Activated CD4-positive, alpha-beta memory T cell treated with anti-CD3 and anti-CD28 coated beads for 36 hours (primary cell): ENCODE measurements at regions of chr12 and their contacts with region 1.

Region 1: DNA sequence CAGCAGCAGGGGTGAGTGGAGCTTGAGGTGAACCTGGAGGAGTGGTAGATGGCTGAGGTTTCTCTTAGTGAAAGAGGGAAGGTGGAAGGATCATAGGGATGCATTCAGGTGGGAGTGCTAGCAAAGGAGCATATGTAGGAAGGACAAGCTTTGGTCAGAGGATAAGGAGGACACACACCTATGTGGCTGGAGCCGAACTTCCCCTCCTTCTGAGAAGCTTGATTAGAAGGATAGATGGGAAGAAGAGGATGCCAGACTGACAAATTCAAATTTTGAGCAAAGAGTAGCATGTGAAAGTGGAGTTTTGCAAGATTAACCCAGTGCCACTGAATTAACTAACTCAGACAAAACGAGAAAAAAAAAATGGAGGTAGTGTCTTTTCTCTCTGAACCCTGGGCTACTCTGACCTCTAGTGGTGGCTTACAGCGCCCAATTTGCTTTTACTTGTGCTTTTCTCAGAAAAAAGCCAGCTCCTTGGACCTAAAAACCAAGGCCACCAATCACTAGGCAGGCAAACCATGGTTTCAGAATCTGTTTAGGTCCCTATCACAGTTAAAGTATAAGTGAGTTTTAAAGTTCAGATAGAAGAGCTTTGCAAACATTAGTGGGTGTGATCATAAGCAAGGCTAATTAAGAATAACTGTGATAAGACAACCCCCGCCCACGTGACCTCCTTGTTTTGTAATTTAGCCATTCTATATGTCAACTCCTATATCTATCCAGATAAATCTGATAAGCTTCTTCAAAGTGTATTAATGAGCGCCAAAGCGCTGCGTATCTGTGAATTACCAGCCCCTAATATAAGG is 15.5 kb downstream of the EMP1 start:
- DNase-seq: peak; percentile 81
- H3K4me3 Mint-ChIP-seq: peak overlapping the region; percentile 53
- H3K27ac Mint-ChIP-seq: peak overlapping the region; percentile 93
- H3K4me1 Mint-ChIP-seq: peaks cover 54% of the 10 kb centered on the region
- H3K27me3 Mint-ChIP-seq: no peaks in the 10 kb centered on the region

Region 2: DNA sequence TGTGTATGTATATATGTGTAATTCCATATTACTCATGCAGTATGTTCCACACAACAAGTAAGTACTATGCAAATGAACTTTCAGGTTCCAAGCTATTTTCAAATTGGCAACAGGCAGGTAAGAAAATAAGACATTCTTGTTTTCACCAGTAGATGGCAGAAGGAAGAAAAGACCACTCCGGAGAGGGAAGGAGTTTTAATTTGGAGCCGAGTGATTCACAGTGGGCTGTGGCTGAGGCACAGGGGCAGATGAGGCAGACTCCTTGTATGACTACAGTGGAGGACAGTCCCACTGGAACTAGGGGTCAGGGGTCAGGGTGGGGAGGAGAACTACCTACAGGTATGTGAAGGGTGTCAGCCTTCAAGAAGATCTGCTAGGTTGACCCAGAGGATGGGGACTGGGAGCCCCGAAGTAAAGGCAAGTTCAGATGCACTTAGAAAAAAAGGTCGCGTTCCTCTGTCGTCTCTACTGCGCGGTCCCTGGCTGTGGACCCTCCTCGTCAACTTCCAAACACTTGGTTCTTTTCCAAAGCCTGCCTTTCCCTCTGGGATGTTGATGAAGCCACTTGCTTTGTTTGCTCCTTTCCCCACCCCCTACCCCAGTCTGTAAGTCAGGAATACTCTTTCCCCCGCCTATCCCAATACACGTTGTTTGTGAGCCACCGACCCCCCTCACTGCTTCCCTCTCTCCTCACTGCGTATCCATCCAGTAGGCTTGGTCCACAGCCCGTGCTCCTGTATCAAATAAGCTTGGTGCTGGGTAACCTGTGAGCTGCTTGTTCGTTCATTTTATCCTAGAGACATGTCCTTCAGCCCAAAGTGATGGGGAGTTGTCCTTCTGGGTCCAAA is 374.8 kb before region 1 on chr12:
- CTCF ChIA-PET with region 1: interaction called, 9 read pairs
- POLR2A ChIA-PET with region 1: no interaction called
- intact Hi-C with region 1: loop called (anchors 5 kb)
- DNase-seq: peak; percentile 79
- H3K4me3 Mint-ChIP-seq: no peak overlapping the region
- H3K27ac Mint-ChIP-seq: peak overlapping the region; percentile 42
- H3K4me1 Mint-ChIP-seq: peaks cover 48% of the 10 kb centered on the region
- H3K27me3 Mint-ChIP-seq: no peaks in the 10 kb centered on the region

Region 3: DNA sequence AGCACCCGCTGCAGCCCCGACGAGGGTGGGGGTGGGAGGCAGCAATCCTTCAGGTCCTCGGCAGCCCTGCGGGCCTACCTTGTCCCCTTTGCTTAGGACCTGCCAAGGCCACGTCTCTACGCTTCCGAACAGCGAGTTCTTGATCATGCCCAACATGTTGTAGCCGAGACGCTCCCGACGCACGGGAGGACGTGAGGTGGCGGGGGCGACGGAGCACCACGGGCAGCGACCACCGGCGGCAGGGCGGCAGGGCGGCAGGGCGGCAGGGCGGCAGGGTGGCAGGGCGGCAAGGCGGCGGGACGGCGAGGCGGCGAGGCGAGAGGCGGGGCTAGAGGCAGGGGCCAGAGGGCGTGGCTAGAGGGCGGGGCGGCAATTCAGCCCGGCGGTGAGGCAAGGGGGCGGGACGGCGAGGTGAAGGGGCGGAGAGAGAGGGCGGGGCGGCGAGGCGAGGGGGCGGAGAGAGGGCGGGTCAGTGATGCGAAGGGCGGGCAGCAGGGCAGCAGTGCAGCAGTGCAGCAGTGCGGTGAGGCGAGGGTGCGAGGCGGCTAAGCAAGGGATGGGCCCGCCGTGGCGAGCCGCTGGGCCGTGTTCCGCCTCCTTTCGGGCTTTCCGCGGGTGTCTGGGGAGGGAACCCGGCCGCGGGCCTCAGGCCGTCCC is 212.0 kb before region 1 on chr12 and contains the start of gene HEBP1:
- CTCF ChIA-PET with region 1: interaction called, 18 read pairs
- POLR2A ChIA-PET with region 1: no interaction called
- intact Hi-C with region 1: loop called (anchors 1 kb)
- DNase-seq: peak; percentile 97
- H3K4me3 Mint-ChIP-seq: peak within 1 kb of the TSS; percentile 82
- H3K27ac Mint-ChIP-seq: peak within 1 kb of the TSS; percentile 53
- H3K4me1 Mint-ChIP-seq: peaks cover 25% of the 10 kb centered on the region
- H3K27me3 Mint-ChIP-seq: peaks cover 6% of the 10 kb centered on the region
- total RNA-seq, gene HEBP1: 20.5 to 22.4 TPM

Region 4: GRCh38 chr12:13165617-13166041 is 46.4 kb before region 1 on chr12:
- CTCF ChIA-PET with region 1: interaction called, 13 read pairs
- POLR2A ChIA-PET with region 1: no interaction called
- intact Hi-C with region 1: loop called (anchors 1 kb)
- DNase-seq: peak; percentile 92
- H3K4me3 Mint-ChIP-seq: no peak overlapping the region
- H3K27ac Mint-ChIP-seq: peak overlapping the region; percentile 52
- H3K4me1 Mint-ChIP-seq: peaks cover 25% of the 10 kb centered on the region
- H3K27me3 Mint-ChIP-seq: peaks cover 5% of the 10 kb centered on the region

Region 5: GRCh38 chr12:13222076-13222475 is 10.0 kb after region 1 on chr12:
- CTCF ChIA-PET with region 1: interaction called, 10 read pairs
- POLR2A ChIA-PET with region 1: no interaction called
- intact Hi-C with region 1: no loop called
- DNase-seq: no peak
- H3K4me3 Mint-ChIP-seq: no peak overlapping the region
- H3K27ac Mint-ChIP-seq: no peak overlapping the region
- H3K4me1 Mint-ChIP-seq: no peaks in the 10 kb centered on the region
- H3K27me3 Mint-ChIP-seq: peaks cover 9% of the 10 kb centered on the region